Activated T-helper 2 cell treated with anti-CD3 and anti-CD28 coated beads, Interferon-gamma antibody, Interleukin-2, Interleukin-4, amounts not matched to agents 10 μg/mL and 5 μg/mL and 100 μg/mL, durations not matched to agents 14 hours and 24 hours and 36 hours (primary cell): ENCODE measurements at regions of chr9 and their contacts with region 1.

Region 1: DNA sequence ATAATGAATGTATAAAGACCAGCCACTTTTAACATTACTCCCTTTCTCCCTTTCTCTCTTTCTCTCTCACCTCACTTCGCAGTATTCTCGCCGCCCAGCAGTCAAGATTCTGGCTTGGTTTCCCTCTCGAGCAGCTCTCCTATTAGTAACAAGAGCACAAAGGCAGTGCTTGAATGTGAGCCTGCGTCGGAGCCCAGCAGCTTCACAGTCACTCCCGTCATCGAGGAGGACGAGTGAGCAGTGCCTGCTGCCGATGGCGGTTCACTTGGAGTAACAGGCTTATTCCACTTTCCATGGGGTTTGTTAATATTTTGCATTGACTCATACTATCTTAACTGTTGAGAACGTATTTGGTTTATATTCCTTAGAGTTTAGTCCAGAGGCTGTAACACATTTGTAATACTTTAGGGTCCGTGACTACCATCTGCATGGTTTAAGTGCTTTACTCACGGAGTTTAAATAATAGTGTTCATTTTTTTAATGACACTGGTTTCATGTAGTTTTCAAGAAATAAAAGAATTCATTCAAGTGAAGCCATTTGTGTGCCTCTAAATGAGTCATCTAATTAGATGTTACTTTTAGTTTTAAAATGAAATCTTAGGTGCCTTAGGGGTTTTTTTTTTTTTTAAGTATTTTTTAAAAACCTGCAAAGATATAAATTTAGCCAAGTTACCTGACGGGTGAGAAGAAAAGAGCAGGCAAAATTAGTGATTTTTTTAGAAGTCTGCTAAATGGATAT is 8.4 kb upstream of the DMRT3 start:
- DNase-seq: no peak
- H3K4me3 Mint-ChIP-seq: no peak overlapping the region
- H3K27ac Mint-ChIP-seq: no peak overlapping the region
- H3K4me1 Mint-ChIP-seq: peaks cover 5% of the 10 kb centered on the region
- H3K27me3 Mint-ChIP-seq: peaks cover 82% of the 10 kb centered on the region

Region 2: GRCh38 chr9:306887-307286 is 661.2 kb before region 1 on chr9:
- intact Hi-C with region 1: no loop called
- DNase-seq: peak; percentile 29
- H3K4me3 Mint-ChIP-seq: no peak overlapping the region
- H3K27ac Mint-ChIP-seq: peak overlapping the region; percentile 24
- H3K4me1 Mint-ChIP-seq: peaks cover 2% of the 10 kb centered on the region
- H3K27me3 Mint-ChIP-seq: no peaks in the 10 kb centered on the region

Region 3: GRCh38 chr9:841371-842209 is 126.5 kb before region 1 on chr9 and contains the start of gene DMRT1:
- intact Hi-C with region 1: loop called (anchors 2 kb)
- DNase-seq: no peak
- H3K4me3 Mint-ChIP-seq: no peak within 1 kb of the TSS
- H3K27ac Mint-ChIP-seq: no peak within 1 kb of the TSS
- H3K4me1 Mint-ChIP-seq: peaks cover 5% of the 10 kb centered on the region
- H3K27me3 Mint-ChIP-seq: peaks cover 51% of the 10 kb centered on the region
- total RNA-seq, gene DMRT1: not detected in 2 replicates

Region 4: GRCh38 chr9:899440-900184 is 68.5 kb before region 1 on chr9:
- intact Hi-C with region 1: no loop called
- DNase-seq: no peak
- H3K4me3 Mint-ChIP-seq: no peak overlapping the region
- H3K27ac Mint-ChIP-seq: no peak overlapping the region
- H3K4me1 Mint-ChIP-seq: peaks cover 3% of the 10 kb centered on the region
- H3K27me3 Mint-ChIP-seq: peaks cover 24% of the 10 kb centered on the region

Region 5: DNA sequence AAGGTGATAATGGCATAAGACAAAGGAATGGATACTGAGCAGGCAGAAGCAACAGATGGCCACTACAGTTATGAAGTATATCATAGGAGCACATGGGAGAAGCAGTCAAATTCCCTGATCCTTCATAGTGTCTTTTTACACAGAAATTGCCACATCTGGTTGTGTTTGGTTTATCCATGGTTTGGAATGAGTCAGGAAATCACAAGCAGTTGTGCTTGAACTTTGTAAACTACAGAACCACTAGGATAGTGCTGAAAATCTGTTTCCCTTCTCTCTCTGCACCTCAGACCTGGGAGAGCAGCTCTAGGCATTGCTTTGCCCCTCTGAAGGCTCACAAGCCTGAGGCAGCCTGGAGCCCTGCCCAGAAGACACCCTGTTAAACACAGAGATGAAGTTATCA is 216.1 kb after region 1 on chr9:
- intact Hi-C with region 1: no loop called
- DNase-seq: no peak
- H3K4me3 Mint-ChIP-seq: no peak overlapping the region
- H3K27ac Mint-ChIP-seq: no peak overlapping the region
- H3K4me1 Mint-ChIP-seq: no peaks in the 10 kb centered on the region
- H3K27me3 Mint-ChIP-seq: no peaks in the 10 kb centered on the region